Ascending aorta (tissue), 2 donors: ENCODE measurements at regions of chr2 and their contacts with region 1.

Region 1: GRCh38 chr2:178450774-178451525 is at the starts of genes PJVK and PRKRA:
- DNase-seq: peak; percentile 91 to 98
- H3K4me3 ChIP-seq: peak within 1 kb of the TSS; percentile 93 to 96
- H3K27ac ChIP-seq: peak within 1 kb of the TSS; percentile 98 to 99
- H3K4me1 ChIP-seq: peaks cover 7 to 20% of the 10 kb centered on the region in 2 donors
- H3K27me3 ChIP-seq: no peaks in the 10 kb centered on the region
- CTCF ChIP-seq: no peak
- total RNA-seq, gene PJVK: not detected
- total RNA-seq, gene PRKRA: 75.5 TPM

Region 2: DNA sequence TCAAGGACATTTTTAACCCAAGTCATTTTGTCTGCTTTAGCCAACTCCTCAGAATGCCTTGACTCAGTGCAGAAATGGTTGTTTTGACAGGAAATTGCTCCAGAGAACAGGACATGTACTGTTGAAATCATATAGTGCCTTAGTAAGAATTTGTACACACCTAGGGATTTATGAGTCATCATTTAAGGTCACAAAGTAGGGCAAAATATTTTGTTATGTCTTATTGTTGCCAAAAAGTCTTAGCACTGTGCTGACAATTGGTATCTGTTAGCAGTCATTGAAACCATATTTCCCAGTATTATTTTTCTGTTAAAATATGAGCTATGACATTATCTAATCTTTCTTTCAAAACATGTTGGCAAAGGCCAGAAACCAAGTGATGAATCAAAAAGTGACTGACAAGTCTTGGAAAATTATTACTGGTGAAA is 152.2 kb before region 1 on chr2:
- intact Hi-C with region 1: loop called (anchors 5 kb)
- DNase-seq: no peak
- H3K4me3 ChIP-seq: no peak overlapping the region
- H3K27ac ChIP-seq: peak overlapping the region; percentile 20 to 47
- H3K4me1 ChIP-seq: peaks cover 4% of the 10 kb centered on the region in 2 donors
- H3K27me3 ChIP-seq: no peaks in the 10 kb centered on the region
- CTCF ChIP-seq: no peak

Region 3: GRCh38 chr2:178522950-178523595 is 72.1 kb after region 1 on chr2:
- intact Hi-C with region 1: loop called (anchors 1 kb)
- DNase-seq: peak; percentile 55 to 92
- H3K4me3 ChIP-seq: peak overlapping the region; percentile 67 to 76
- H3K27ac ChIP-seq: peak overlapping the region; percentile 60 to 71
- H3K4me1 ChIP-seq: peaks cover 0 to 6% of the 10 kb centered on the region in 2 donors
- H3K27me3 ChIP-seq: no peaks in the 10 kb centered on the region
- CTCF ChIP-seq: peak; percentile 59 to 82 (median 74)

Region 4: GRCh38 chr2:178579006-178579405 is 128.1 kb after region 1 on chr2:
- intact Hi-C with region 1: no loop called
- DNase-seq: no peak
- H3K4me3 ChIP-seq: no peak overlapping the region
- H3K27ac ChIP-seq: no peak overlapping the region
- H3K4me1 ChIP-seq: no peaks in the 10 kb centered on the region
- H3K27me3 ChIP-seq: no peaks in the 10 kb centered on the region
- CTCF ChIP-seq: no peak